SK-MEL-5 (cell line): ENCODE measurements at regions of chr5 and their contacts with region 1.

Region 1: GRCh38 chr5:135829681-135830383 is 4.6 kb upstream of the SLC25A48 start:
- DNase-seq: peak; percentile 72

Region 2: GRCh38 chr5:135466178-135467050 is 363.4 kb before region 1 on chr5:
- in situ Hi-C with region 1: loop called (anchors 25 kb)
- DNase-seq: peak; percentile 68

Region 3: GRCh38 chr5:135560858-135561257 is 269.0 kb before region 1 on chr5:
- in situ Hi-C with region 1: loop called (anchors 25 kb)
- DNase-seq: peak; percentile 82

Region 4: GRCh38 chr5:135909639-135910038 is 79.8 kb after region 1 on chr5:
- in situ Hi-C with region 1: no loop called
- DNase-seq: no peak